ENCODE measurements at regions of chr4 and their contacts with region 1.

Region 1: GRCh38 chr4:34720571-34720970 is 1523.7 kb downstream of the ARAP2 start:
- DNase-seq: no peak
- H3K4me3 ChIP-seq: no peak overlapping the region
- H3K27ac ChIP-seq: no peak overlapping the region
- H3K4me1 ChIP-seq: no peaks in the 10 kb centered on the region
- H3K27me3 ChIP-seq: no peaks in the 10 kb centered on the region
- CTCF ChIP-seq: peak in 1 of 3 donors; percentile 42
- POLR2A ChIP-seq: no peak

Region 2: DNA sequence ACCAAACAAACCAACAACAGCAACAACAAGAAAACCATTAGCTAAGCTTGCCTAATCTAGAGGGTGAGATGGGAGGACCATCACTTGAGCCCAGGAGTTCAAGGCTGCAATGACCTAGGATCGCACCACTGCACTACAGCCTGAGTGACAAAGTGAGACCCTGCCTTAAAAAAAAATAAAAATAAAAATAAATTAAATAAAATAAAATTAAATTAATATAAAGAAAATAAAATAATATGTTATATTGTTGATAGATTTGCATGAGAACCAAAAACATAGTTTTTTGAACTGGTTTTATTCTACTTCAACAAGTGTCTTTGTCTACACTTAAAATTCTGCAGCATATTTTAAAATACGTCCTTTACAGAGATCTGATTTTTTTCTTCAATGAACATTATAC is 1159.3 kb before region 1 on chr4:
- intact Hi-C with region 1: no loop called
- DNase-seq: no peak
- H3K4me3 ChIP-seq: no peak overlapping the region
- H3K27ac ChIP-seq: no peak overlapping the region
- H3K4me1 ChIP-seq: no peaks in the 10 kb centered on the region
- H3K27me3 ChIP-seq: no peaks in the 10 kb centered on the region
- CTCF ChIP-seq: no peak
- POLR2A ChIP-seq: no peak

Region 3: DNA sequence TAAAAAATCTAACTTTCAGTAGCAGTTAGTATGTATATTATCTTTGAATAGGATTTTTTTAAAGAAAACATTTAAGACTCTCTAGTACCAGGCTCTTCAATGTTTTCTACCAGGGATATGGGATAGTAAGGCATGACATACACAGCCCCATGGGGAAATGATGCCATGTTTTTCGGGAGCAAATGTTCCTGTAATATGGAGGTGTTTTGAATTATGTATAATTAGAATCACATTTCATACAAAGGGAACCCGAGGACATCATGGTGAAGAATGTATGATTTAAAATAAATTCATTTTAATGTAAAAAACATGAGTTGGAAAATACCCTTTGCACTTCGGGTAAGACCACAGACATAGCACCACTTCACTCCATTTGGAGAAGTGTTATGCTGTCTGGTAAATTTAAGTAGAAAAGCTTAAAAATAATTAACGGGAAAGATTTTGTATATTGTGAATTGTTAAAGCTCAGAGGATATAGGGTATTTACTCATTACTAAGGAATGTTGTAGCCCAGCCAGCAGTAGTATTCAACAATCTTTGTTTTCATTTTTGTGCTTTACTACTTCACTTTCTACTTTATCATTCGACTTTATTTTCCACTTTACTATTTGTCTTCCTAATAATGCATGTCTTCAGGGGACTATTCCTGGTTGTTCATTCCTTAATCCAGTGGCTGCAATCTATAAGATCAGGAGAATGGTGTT is 527.0 kb before region 1 on chr4:
- intact Hi-C with region 1: loop called (anchors 5 kb)
- DNase-seq: no peak
- H3K4me3 ChIP-seq: no peak overlapping the region
- H3K27ac ChIP-seq: no peak overlapping the region
- H3K4me1 ChIP-seq: no peaks in the 10 kb centered on the region
- H3K27me3 ChIP-seq: no peaks in the 10 kb centered on the region
- CTCF ChIP-seq: no peak
- POLR2A ChIP-seq: no peak